GM13976 (cell line): ENCODE measurements at regions of chr14 and their contacts with region 1.

Region 1: GRCh38 chr14:60184146-60184904 is 19.1 kb upstream of the DHRS7 start:
- DNase-seq: no peak
- CTCF ChIP-seq: no peak

Region 2: DNA sequence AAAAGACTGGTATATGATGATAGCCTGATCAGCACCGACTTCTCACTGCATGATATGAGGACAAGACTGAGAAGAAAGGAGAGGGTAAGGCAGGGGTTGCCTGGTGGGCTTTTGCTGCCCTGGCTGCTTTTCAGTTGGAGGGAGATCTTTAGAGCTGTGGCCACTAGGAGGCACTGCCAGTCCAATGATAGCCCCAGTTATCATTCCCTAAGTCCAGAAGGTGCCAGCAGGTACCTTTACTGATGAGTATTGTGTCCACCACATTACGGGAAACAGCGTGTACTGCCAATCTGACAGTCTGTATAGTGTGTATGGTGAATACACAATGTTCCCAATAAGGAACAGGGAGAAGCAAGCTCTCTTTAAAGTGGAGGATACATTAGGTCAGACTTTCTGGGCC is 551.9 kb before region 1 on chr14:
- in situ Hi-C with region 1: loop called (anchors 25 kb)
- DNase-seq: peak; percentile 55
- CTCF ChIP-seq: peak; percentile 56

Region 3: DNA sequence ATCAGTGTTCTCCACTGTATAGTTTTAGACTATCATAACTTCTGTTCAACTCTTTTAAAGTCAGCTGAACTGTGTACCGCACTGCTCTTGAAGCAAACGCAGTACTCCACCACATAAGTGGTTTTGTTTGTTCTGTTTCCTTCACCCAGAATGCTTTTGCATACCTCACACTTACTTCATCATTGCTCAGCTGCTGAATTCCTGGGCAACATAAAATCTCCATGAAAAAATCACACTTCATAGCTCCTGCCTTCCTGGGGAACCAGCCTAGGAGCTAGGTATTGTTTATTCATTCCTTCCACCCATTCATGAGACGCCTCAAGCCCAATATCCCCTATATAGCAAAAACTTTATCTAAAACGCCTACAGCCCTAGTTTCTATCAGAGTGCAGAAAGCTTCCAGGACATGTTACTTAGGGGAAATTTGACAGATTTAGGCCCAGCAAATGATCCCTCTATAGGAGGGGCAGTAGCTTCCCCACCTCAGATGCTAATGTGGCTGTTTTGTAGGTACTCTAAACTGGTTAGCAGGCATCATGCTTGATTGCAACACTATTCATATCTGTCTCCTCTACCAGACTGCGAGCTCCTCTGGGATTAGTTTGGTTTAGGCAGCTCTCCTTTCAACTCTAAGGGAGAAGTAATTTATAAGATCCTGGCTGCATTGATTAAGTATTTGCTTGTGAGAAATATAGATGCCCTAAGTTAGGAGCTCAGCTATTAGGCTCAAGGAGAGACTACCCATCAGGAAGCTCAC is 219.9 kb before region 1 on chr14:
- in situ Hi-C with region 1: loop called (anchors 10 kb)
- DNase-seq: no peak
- CTCF ChIP-seq: no peak

Region 4: GRCh38 chr14:60064491-60065072 is 119.7 kb before region 1 on chr14:
- in situ Hi-C with region 1: loop called (anchors 10 kb)
- DNase-seq: peak; percentile 53
- CTCF ChIP-seq: peak; percentile 23

Region 5: DNA sequence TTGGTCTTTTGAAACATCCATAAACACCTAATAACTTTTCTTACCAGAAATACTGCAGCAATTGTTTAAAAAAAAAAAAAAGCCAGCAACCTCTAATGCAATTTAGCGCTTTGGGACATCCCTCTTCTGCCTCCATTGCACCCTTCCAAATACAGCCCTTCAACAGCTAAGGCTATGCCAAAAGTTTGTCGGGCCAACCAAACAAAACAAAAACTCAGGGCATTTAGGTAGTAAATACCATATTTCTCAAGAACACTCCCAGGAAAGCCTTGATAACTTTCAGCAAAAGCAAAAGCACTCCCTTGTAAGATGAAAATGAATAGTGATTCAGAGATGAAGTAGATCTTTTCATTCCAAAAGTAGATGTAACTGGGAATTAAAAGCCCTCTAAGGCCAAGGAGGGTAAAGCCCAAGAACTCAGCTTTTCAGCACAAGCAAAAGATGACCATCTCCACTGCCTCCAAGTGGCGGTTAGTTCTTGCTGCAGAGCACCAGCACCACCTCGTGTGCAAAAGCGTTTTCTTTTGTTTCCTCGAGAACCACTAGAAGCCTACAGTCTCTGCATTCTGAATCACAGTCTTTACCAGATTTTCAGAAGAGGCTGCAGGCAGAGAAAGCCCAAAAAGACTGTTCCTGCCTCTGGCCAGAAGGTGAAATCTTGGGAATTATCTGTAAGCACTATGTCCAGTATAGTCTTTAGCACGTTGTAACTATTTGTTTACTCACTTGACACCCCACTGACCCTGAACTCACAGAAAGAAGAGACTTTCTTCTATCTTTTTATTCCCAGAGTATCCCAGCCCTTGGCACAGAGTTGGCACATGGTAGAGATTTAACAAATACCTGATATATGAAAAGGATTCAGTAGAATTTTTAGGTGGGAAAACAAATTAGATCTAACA is 377.8 kb after region 1 on chr14:
- in situ Hi-C with region 1: loop called (anchors 5 kb)
- DNase-seq: peak; percentile 42
- CTCF ChIP-seq: peak; percentile 74